OCI-LY7 (cell line): ENCODE measurements at regions of chr7 and their contacts with region 1.

Region 1: DNA sequence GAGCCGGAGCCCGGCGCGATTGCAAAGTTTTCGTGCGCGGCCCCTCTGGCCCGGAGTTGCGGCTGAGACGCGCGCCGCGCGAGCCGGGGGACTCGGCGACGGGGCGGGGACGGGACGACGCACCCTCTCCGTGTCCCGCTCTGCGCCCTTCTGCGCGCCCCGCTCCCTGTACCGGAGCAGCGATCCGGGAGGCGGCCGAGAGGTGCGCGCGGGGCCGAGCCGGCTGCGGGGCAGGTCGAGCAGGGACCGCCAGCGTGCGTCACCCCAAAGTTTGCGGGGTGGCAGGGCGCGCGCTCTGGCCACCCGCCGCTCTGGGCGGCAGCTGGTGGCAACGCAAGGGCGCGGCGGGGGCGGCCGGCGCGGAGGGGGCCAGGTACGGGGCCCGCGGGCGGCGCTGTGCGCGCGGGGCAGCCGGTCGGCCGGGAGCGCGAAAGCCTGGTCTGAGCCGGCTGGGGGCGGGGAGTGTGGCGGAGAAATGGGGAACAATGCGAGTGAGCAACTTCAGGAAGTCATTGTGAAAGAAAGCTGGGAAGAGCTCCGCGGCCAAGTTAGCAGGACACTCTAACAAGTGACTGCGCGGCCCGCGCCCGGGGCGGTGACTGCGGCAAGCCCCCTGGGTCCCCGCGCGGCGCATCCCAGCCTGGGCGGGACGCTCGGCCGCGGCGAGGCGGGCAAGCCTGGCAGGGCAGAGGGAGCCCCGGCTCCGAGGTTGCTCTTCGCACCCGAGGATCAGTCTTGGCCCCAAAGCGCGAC is at the start of gene IKZF1:
- DNase-seq: peak; percentile 70
- H3K4me3 ChIP-seq: peak within 1 kb of the TSS; percentile 71
- H3K27ac ChIP-seq: peak within 1 kb of the TSS; percentile 86
- H3K4me1 ChIP-seq: peaks cover 32% of the 10 kb centered on the region
- CTCF ChIP-seq: no peak
- total RNA-seq, gene IKZF1: 90.0 and 108 TPM in 2 replicates

Region 2: DNA sequence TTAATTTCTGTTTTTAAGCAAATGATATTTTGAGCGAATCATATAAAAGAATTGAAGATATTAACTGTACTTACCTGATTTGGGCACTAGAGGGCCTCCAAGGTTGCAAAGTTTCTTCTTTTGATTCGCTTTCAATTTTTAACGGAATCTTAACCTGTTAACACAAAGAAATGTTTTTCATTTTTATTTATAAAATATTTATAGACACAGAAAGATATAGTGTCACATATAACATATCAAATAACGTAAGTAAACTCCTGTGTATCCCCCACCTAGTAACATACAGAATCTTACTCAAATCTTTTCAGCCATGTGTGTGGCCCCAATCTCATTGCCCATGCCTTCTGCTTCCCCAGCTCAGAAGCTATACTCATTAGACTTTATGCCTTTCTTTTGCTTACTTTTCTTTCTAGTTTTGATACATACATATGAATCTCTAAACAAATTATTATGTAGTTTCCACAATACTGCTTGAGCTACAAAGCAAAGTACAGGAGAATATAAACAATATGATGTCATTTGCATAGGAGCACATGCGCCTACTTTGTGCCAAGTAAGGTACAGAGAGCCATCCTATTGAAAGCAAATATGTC is 161.8 kb before region 1 on chr7:
- CTCF ChIA-PET with region 1: no interaction called
- POLR2A ChIA-PET with region 1: interaction called, 293 read pairs
- intact Hi-C with region 1: no loop called
- DNase-seq: peak; percentile 80
- H3K4me3 ChIP-seq: no peak overlapping the region
- H3K27ac ChIP-seq: peak overlapping the region; percentile 99
- H3K4me1 ChIP-seq: peaks cover 70% of the 10 kb centered on the region
- CTCF ChIP-seq: peak; percentile 96

Region 3: DNA sequence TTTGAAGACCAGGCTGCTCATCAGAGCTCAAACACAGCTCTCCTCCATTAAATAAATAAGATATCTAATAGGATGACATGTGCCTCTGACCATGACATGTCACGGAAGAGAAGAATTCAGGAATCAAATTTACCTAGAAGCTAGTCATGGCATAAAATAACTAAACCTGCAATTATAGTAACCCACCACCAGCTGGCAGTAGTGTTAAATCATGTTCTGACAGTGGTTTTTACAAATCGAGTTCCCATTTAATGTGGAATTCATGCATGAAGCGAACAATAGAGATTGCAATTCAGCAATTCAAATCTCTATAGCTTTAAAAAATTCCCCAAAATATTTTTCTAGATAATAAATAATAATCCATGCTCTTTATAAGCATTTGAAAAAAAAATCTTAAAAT is 74.4 kb before region 1 on chr7:
- CTCF ChIA-PET with region 1: no interaction called
- POLR2A ChIA-PET with region 1: interaction called, 3 read pairs
- intact Hi-C with region 1: loop called (anchors 5 kb)
- DNase-seq: peak; percentile 68
- H3K4me3 ChIP-seq: no peak overlapping the region
- H3K27ac ChIP-seq: no peak overlapping the region
- H3K4me1 ChIP-seq: no peaks in the 10 kb centered on the region
- CTCF ChIP-seq: peak; percentile 97

Region 4: GRCh38 chr7:50281680-50282445 is 22.5 kb before region 1 on chr7:
- CTCF ChIA-PET with region 1: no interaction called
- POLR2A ChIA-PET with region 1: interaction called, 13 read pairs
- intact Hi-C with region 1: loop called (anchors 2 kb)
- DNase-seq: peak; percentile 83
- H3K4me3 ChIP-seq: peak overlapping the region; percentile 55
- H3K27ac ChIP-seq: peak overlapping the region; percentile 91
- H3K4me1 ChIP-seq: peaks cover 42% of the 10 kb centered on the region
- CTCF ChIP-seq: no peak

Region 5: GRCh38 chr7:50335795-50336754 is 31.7 kb after region 1 on chr7:
- CTCF ChIA-PET with region 1: interaction called, 7 read pairs
- POLR2A ChIA-PET with region 1: interaction called, 265 read pairs
- intact Hi-C with region 1: loop called (anchors 1 kb)
- DNase-seq: peak; percentile 71
- H3K4me3 ChIP-seq: peak overlapping the region; percentile 6
- H3K27ac ChIP-seq: peak overlapping the region; percentile 97
- H3K4me1 ChIP-seq: peaks cover 100% of the 10 kb centered on the region
- CTCF ChIP-seq: peak; percentile 75

Region 6: DNA sequence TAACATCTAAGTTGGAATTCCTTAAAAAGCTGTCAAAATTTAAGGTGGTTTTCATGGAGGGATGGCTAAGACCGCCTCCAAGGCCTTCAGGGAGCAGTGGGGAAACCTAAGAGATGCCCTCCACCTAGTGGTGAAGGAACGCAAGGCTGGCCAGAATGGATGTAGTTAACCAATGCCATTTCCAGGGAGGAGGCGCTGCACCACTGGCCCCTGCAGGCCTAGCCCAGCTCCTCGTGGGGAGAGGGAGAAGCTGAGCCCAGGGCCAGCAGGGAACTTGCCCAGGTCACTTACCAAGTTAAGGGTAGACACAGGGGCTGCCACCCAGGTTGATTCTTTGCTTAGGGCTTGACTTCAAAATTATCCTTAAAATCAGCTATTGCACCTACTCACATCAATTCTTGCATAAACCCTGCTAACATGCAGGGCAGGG is 113.8 kb after region 1 on chr7:
- CTCF ChIA-PET with region 1: no interaction called
- POLR2A ChIA-PET with region 1: no interaction called
- intact Hi-C with region 1: loop called (anchors 2 kb)
- DNase-seq: peak; percentile 88
- H3K4me3 ChIP-seq: no peak overlapping the region
- H3K27ac ChIP-seq: no peak overlapping the region
- H3K4me1 ChIP-seq: peaks cover 29% of the 10 kb centered on the region
- CTCF ChIP-seq: peak; percentile 98